Activated CD4-positive, alpha-beta T cell treated with anti-CD3 and anti-CD28 coated beads for 36 hours (primary cell): ENCODE measurements at regions of chr7 and their contacts with region 1.

Region 1: DNA sequence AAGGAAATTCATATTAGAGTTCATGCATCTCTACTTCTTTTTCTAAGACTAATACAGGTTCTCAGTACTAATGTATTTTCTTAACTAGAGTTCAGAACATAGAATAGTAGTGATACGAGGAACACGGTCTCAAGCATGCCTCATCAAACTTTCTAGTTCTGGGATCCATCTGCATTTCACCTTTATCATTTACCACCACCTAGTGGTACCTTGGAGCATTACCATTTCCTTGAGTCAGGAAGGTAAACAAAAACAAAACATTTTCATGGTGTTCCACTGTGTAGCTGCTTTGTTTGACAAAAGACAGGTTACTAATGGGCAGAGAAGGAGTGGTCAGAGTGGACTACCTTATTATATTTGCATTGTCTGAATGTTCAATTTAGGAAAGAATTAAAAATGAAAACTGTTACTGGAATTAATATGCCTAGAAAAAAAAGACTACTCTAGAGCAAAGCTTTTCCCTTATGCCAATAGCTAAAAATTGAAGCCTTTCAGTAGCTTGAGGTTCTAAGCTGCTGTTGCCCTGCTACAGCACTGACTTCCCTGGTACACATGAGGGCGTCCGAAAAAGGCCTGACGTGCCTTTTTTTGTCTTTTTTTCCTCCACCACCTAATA is 44.5 kb downstream of the STARD3NL start:
- DNase-seq: no peak
- ATAC-seq: peak; percentile 51
- H3K4me3 Mint-ChIP-seq: no peak overlapping the region
- H3K27ac Mint-ChIP-seq: no peak overlapping the region
- H3K4me1 Mint-ChIP-seq: peaks cover 20% of the 10 kb centered on the region
- H3K27me3 Mint-ChIP-seq: no peaks in the 10 kb centered on the region

Region 2: GRCh38 chr7:37901236-37901827 is 321.3 kb before region 1 on chr7:
- CTCF ChIA-PET with region 1: interaction called, 6 read pairs
- POLR2A ChIA-PET with region 1: no interaction called
- intact Hi-C with region 1: loop called in 1 of 2 experiments (anchors 1 kb)
- DNase-seq: no peak
- ATAC-seq: peak; percentile 44
- H3K4me3 Mint-ChIP-seq: no peak overlapping the region
- H3K27ac Mint-ChIP-seq: no peak overlapping the region
- H3K4me1 Mint-ChIP-seq: no peaks in the 10 kb centered on the region
- H3K27me3 Mint-ChIP-seq: peaks cover 2% of the 10 kb centered on the region

Region 3: DNA sequence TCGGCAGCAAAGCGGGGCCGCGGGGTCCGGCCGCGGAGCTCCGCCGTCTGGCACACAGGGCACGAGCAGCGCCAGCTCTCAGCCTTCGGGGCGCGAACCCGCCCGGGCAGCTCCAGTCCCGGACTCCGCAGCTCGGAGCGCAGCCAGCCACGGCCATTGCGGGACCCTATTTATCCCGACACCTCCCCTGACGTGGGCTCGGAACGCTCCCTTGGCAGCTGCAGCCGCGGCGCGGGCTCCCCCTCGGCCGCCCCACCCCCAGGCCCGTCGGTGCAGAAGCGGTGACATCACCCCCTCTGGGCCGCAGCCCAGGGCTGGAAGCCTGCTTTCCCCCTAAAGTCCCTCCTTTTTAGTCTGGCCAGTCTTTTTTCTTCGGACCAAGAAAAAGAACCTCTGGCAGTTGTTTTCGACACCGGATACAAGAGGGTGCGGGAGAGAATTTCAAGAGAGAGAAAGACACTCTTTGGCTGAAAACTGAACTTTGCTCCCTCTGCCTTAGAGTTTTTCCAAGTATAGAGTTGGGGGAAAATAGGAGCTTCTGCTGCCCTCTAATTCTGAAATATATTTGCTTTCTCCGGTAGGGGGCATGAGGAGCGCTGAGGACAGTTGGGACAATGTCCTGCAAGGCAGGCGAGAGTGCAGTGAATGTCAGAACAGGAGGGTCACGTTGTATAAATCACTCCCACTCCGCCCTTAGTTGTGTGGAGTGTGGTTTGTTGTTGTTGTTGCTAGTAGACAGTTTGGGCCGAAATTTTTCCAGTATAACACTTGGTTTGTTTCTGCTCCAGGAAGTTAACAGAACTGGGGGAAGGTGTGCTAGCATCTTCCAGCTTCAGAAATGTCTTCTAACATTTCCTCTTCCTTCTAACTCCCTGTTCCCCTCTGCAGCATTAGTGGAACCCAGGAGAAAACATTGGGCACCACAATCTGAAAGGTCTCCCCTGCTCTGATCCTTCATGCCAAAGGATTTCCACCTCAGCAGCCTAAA is 305.6 kb before region 1 on chr7 and contains the start of gene SFRP4:
- CTCF ChIA-PET with region 1: interaction called, 3 read pairs
- POLR2A ChIA-PET with region 1: no interaction called
- intact Hi-C with region 1: loop called in 1 of 2 experiments (anchors 5 kb)
- DNase-seq: peak; percentile 34
- ATAC-seq: no peak
- H3K4me3 Mint-ChIP-seq: peak within 1 kb of the TSS; percentile 35
- H3K27ac Mint-ChIP-seq: no peak within 1 kb of the TSS
- H3K4me1 Mint-ChIP-seq: peaks cover 15% of the 10 kb centered on the region
- H3K27me3 Mint-ChIP-seq: peaks cover 52% of the 10 kb centered on the region
- total RNA-seq, gene SFRP4: not detected

Region 4: GRCh38 chr7:38107486-38107893 is 115.1 kb before region 1 on chr7:
- CTCF ChIA-PET with region 1: interaction called, 70 read pairs
- POLR2A ChIA-PET with region 1: no interaction called
- intact Hi-C with region 1: loop called (anchors 1 kb)
- DNase-seq: peak; percentile 80
- ATAC-seq: peak; percentile 85
- H3K4me3 Mint-ChIP-seq: no peak overlapping the region
- H3K27ac Mint-ChIP-seq: no peak overlapping the region
- H3K4me1 Mint-ChIP-seq: no peaks in the 10 kb centered on the region
- H3K27me3 Mint-ChIP-seq: peaks cover 16% of the 10 kb centered on the region

Region 5: DNA sequence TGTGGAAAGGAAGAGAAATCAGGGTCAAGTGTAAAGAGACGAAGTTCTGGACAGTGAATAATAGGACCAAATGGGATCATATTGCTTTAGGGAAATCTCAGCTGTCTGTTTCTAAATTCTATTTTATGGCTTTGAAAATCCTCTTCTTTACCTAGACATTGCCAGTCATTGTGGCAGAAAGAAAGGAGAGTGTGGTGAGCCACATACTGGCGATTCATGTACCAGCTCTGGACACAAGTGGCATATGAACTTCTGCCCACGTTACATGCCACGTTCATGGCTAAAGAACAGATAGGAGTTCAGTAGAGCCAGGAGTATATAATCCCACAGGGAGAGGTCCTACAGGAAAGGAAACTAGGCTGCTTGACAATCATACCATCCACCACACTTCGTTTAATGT is 16.5 kb before region 1 on chr7:
- CTCF ChIA-PET with region 1: interaction called, 20 read pairs
- POLR2A ChIA-PET with region 1: no interaction called
- intact Hi-C with region 1: no loop called
- DNase-seq: no peak
- ATAC-seq: no peak
- H3K4me3 Mint-ChIP-seq: no peak overlapping the region
- H3K27ac Mint-ChIP-seq: no peak overlapping the region
- H3K4me1 Mint-ChIP-seq: no peaks in the 10 kb centered on the region
- H3K27me3 Mint-ChIP-seq: no peaks in the 10 kb centered on the region

Region 6: DNA sequence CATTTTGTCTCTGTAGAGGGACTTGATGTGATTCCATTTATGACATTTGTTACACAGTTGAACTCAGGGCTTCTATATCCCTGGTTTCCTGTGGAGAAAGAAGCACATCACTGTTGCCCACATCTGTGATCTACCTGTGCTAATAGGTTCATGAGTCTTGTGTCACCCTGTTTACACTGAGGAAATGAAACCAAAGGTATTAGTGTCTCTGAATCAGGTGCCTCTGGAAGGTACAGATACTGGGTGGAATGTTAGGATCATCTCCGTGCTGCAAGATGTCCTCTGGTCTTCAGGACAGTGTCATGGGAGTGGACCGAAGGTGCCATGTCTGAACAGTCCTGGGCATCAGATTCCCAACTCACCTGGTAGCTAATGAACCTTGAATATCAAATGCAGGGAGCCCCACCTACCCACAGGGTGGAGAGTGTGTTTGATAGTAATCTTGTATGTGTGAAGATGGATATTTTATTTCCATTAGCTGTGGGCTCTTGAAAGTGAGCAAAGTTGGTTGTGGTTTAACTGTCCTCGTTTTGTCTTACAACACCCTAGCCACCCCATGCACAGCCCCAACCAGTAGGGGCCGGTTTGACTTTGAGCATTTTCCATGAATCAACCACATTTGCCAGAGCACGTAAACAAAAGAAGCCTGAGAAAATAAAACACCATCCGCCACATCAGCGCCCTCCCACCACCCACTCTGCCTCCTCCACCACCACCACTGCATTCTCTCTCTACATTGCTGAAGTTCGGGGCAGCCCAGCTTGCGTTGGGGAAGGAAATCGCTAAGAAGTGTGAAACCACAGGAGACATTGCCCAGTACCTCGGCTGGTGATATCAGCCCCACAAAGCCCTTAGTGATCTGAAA is 10.1 kb after region 1 on chr7:
- CTCF ChIA-PET with region 1: interaction called, 12 read pairs
- POLR2A ChIA-PET with region 1: interaction called, 6 read pairs
- intact Hi-C with region 1: no loop called
- DNase-seq: peak; percentile 84
- ATAC-seq: peak; percentile 88
- H3K4me3 Mint-ChIP-seq: peak overlapping the region; percentile 50
- H3K27ac Mint-ChIP-seq: peak overlapping the region; percentile 71
- H3K4me1 Mint-ChIP-seq: peaks cover 39% of the 10 kb centered on the region
- H3K27me3 Mint-ChIP-seq: no peaks in the 10 kb centered on the region

Region 7: DNA sequence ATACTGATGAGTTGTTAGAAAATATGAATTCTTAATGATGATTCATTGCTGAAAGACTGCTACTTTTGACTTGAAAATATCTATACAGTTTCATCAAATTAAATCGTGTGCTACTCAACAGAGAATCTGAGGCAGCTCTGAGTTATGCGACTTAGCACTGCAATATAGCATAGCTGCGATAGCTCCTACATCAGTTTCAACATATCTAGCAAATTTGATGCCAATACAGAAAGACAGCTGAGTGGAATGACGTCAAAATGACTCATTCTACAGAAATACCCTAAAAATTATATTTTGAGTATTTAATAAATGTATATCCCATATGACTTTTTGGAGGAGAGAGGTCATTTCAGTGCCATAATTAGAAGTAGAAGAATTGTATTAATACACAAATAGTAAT is 51.9 kb after region 1 on chr7:
- CTCF ChIA-PET with region 1: no interaction called
- POLR2A ChIA-PET with region 1: no interaction called
- intact Hi-C with region 1: no loop called
- DNase-seq: no peak
- ATAC-seq: no peak
- H3K4me3 Mint-ChIP-seq: no peak overlapping the region
- H3K27ac Mint-ChIP-seq: no peak overlapping the region
- H3K4me1 Mint-ChIP-seq: no peaks in the 10 kb centered on the region
- H3K27me3 Mint-ChIP-seq: no peaks in the 10 kb centered on the region